Breast epithelium (tissue), 4 donors: ENCODE measurements at regions of chr6 and their contacts with region 1.

Region 1: DNA sequence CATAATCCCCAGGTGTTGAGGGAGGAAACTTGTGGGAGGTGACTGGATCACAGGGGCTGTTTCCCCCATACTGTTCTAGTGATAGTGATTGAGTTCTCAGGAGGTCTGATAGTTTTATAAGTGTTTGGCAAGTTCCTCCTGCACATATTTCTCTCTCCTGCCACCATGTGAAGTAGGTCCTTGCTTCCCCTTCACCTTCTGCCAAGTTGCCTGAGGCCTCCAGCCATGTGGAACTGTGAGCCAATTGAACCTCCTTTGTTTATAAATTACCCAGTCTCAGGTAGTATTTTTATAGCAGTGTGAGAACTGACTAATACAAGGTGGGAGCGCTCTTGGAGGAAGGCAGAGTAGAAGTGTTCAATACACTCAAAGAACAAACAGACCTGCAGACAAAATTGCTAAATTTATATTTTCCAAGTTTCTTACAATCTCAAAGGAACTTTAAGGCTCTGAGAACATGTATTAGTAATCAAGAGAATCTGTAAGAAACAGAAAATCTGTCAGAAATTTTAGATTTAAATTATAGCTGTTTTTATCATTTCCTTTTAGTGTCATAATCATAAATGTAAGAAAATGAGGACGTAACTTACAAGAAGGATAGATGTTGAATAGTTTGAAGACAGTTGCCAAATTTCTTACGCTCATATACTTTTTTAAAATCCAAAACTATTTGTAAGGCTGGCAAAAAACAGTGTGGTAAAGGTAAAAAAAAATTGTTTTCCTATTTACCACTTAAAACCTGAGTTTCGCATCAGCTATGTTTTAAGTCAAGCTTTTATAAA is 77.7 kb downstream of the ASCC3 start:
- DNase-seq: no peak
- H3K4me3 ChIP-seq: no peak overlapping the region
- H3K27ac ChIP-seq: no peak overlapping the region
- H3K4me1 ChIP-seq: peaks cover 0 to 5% of the 10 kb centered on the region in 2 donors
- H3K27me3 ChIP-seq: no peaks in the 10 kb centered on the region
- CTCF ChIP-seq: no peak
- POLR2A ChIP-seq: no peak

Region 2: GRCh38 chr6:100257793-100258395 is 545.6 kb before region 1 on chr6:
- intact Hi-C with region 1: loop called (anchors 5 kb)
- DNase-seq: no peak
- H3K4me3 ChIP-seq: no peak overlapping the region
- H3K27ac ChIP-seq: no peak overlapping the region
- H3K4me1 ChIP-seq: no peaks in the 10 kb centered on the region
- H3K27me3 ChIP-seq: no peaks in the 10 kb centered on the region
- CTCF ChIP-seq: no peak
- POLR2A ChIP-seq: no peak

Region 3: GRCh38 chr6:100370265-100370664 is 433.2 kb before region 1 on chr6:
- intact Hi-C with region 1: no loop called
- DNase-seq: no peak
- H3K4me3 ChIP-seq: no peak overlapping the region
- H3K27ac ChIP-seq: no peak overlapping the region
- H3K4me1 ChIP-seq: no peaks in the 10 kb centered on the region
- H3K27me3 ChIP-seq: no peaks in the 10 kb centered on the region
- CTCF ChIP-seq: no peak
- POLR2A ChIP-seq: no peak

Region 4: DNA sequence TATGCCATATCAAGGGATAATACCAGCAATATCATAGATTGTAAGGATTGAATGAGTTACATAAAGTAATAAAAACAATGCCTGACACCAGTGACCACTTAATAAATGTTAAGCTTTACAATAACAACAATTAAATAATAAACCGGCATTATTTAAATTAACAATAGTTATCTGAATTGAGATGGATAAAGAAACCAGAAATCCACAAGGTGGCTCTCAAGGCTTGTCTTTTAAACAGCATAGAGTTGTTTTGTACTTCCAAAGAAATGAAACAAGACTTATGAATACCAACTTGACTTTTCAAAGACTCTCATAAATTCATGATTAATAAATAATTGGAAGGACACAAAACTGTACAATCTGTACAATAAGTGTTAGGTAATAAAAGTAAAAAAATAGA is 125.4 kb before region 1 on chr6:
- intact Hi-C with region 1: no loop called
- DNase-seq: no peak
- H3K4me3 ChIP-seq: no peak overlapping the region
- H3K27ac ChIP-seq: no peak overlapping the region
- H3K4me1 ChIP-seq: no peaks in the 10 kb centered on the region
- H3K27me3 ChIP-seq: no peaks in the 10 kb centered on the region
- CTCF ChIP-seq: no peak
- POLR2A ChIP-seq: no peak

Region 5: GRCh38 chr6:101042966-101043365 is 239.5 kb after region 1 on chr6:
- intact Hi-C with region 1: no loop called
- DNase-seq: no peak
- H3K4me3 ChIP-seq: no peak overlapping the region
- H3K27ac ChIP-seq: no peak overlapping the region
- H3K4me1 ChIP-seq: no peaks in the 10 kb centered on the region
- H3K27me3 ChIP-seq: no peaks in the 10 kb centered on the region
- CTCF ChIP-seq: no peak
- POLR2A ChIP-seq: no peak

Region 6: GRCh38 chr6:101085327-101085726 is 281.9 kb after region 1 on chr6:
- intact Hi-C with region 1: loop called (anchors 5 kb)
- DNase-seq: no peak
- H3K4me3 ChIP-seq: no peak overlapping the region
- H3K27ac ChIP-seq: no peak overlapping the region
- H3K4me1 ChIP-seq: no peaks in the 10 kb centered on the region
- H3K27me3 ChIP-seq: no peaks in the 10 kb centered on the region
- CTCF ChIP-seq: no peak
- POLR2A ChIP-seq: no peak